Activated T-helper 2 cell treated with anti-CD3 and anti-CD28 coated beads, Interferon-gamma antibody, Interleukin-2, Interleukin-4, amounts not matched to agents 10 μg/mL and 5 μg/mL and 100 μg/mL, durations not matched to agents 14 hours and 24 hours and 36 hours (primary cell): ENCODE measurements at regions of chr5 and their contacts with region 1.

Region 1: GRCh38 chr5:172777881-172778814 is 7.2 kb upstream of the DUSP1 start:
- DNase-seq: no peak
- H3K4me3 Mint-ChIP-seq: peak overlapping the region; percentile 72
- H3K27ac Mint-ChIP-seq: peak overlapping the region; percentile 98
- H3K4me1 Mint-ChIP-seq: peaks cover 41% of the 10 kb centered on the region
- H3K27me3 Mint-ChIP-seq: no peaks in the 10 kb centered on the region

Region 2: DNA sequence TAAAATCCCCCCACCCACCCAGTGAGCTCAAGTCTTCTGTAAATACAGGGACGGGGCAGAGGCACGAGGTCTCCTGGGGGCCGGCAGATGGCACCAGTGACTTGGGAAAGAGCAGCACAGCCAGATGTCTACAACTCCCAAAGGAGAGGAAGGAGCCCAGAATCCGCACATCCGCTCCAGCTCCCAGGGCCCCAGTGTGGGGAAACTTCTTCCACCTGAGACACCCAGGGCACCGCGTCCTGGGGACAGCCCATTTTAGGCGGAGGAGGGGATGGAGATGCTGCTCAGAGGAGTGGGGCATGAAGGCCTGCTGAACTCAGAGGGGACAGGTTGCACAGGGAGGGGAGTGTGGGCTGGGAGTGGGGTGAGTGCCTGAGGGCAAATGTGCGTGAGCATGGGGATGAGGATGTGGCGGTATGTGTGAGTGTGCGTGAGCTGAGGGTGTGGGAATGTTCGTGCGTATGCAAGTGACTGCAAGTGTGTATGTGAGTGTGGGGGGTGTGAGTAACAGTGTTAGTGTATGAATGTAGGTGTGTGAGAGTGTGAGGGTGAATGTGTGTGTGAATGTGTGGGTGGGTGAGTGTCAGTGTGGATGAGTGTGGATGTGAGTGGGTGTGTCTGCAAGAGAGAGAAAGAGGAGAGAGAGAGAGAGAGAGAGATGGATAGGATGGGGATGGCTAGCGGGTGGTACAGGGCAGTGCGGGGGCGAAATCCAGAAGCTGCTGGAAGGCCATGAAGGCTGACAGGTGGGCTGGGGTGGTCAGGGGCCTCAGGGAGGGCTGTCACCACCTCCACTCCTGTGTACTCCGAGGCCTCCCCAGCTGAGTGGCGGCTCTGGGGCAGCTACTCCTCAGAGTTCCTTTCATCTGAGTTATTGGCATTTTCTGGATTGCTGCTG is 70.6 kb before region 1 on chr5:
- intact Hi-C with region 1: no loop called
- DNase-seq: no peak
- H3K4me3 Mint-ChIP-seq: no peak overlapping the region
- H3K27ac Mint-ChIP-seq: no peak overlapping the region
- H3K4me1 Mint-ChIP-seq: no peaks in the 10 kb centered on the region
- H3K27me3 Mint-ChIP-seq: peaks cover 23% of the 10 kb centered on the region

Region 3: GRCh38 chr5:172806897-172807672 is 28.9 kb after region 1 on chr5:
- intact Hi-C with region 1: loop called (anchors 1 kb)
- DNase-seq: peak; percentile 78
- H3K4me3 Mint-ChIP-seq: peak overlapping the region; percentile 58
- H3K27ac Mint-ChIP-seq: peak overlapping the region; percentile 91
- H3K4me1 Mint-ChIP-seq: peaks cover 14% of the 10 kb centered on the region
- H3K27me3 Mint-ChIP-seq: no peaks in the 10 kb centered on the region